ENCODE measurements at regions of chr6 and their contacts with region 1.

Region 1: GRCh38 chr6:27132532-27133280 is 114.8 kb upstream of the PRSS16 start:
- DNase-seq: peak; percentile 96 to 99 (median 98)
- H3K4me3 ChIP-seq: peak overlapping the region; percentile 72 to 90
- H3K4me3 Mint-ChIP-seq: no peak overlapping the region
- H3K27ac ChIP-seq: peak overlapping the region; percentile 93
- H3K27ac Mint-ChIP-seq: no peak overlapping the region
- H3K4me1 ChIP-seq: peaks cover 27% of the 10 kb centered on the region
- H3K4me1 Mint-ChIP-seq: peaks cover 0 to 24% (median 10%) of the 10 kb centered on the region in 4 donors
- H3K27me3 ChIP-seq: no peaks in the 10 kb centered on the region
- H3K27me3 Mint-ChIP-seq: no peaks in the 10 kb centered on the region

Region 2: DNA sequence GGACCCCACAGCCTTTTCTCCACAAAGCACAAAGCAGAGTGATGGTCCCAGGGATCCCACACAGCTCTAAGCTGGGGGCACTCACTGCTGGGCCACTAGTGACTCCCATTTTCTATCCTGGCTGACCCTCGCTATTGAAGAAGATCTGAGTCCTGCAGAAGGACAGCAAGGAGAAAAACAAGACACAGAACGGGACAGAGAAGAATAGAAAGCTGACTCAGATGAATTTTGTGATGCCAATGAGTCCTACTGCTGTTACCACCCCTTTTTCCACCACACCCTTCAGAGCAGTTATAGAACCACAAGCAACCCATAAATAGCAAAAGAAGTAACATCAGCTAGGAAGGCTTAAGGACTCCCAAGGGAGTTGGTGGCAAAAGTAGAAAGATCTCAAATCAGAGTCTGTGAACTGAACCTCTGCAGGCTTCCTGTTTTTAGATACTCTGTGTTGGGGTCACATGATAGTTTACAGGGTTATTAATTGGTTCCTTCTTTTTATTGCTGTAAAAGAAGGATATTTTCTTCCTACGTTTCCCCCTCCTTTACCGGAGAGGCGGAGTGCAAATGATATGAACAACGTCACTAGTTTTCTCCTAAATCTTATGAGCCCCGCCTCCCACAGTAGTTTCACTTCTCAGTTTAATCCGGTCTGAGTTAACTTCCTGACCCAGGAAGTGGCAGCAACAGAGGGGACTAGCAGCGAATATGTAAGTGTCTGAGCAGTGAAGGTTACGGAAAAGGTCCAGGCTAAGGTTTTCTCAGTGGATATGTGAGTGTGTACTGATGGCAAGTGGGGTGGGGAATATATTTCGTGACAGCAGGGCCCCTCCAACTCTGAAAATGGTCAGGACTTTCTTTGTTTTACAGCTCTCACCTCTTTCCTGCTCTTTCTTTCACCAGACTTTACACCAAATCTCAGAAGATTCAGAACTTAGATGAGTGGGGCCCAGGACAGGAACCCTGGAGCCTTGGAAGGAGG is 1170.3 kb before region 1 on chr6 and contains the start of gene TRIM38:
- CTCF ChIA-PET with region 1: no interaction called
- POLR2A ChIA-PET with region 1: interaction called, 3 read pairs
- intact Hi-C with region 1: loop called (anchors 5 kb)
- DNase-seq: peak; percentile 82 to 95 (median 87)
- H3K4me3 ChIP-seq: peak within 1 kb of the TSS; percentile 66 to 90
- H3K4me3 Mint-ChIP-seq: peak within 1 kb of the TSS; percentile 98 to 100 (median 98)
- H3K27ac ChIP-seq: peak within 1 kb of the TSS; percentile 92
- H3K27ac Mint-ChIP-seq: peak within 1 kb of the TSS; percentile 92 to 100 (median 99)
- H3K4me1 ChIP-seq: peaks cover 84% of the 10 kb centered on the region
- H3K4me1 Mint-ChIP-seq: peaks cover 64 to 93% (median 79%) of the 10 kb centered on the region in 4 donors
- H3K27me3 ChIP-seq: no peaks in the 10 kb centered on the region
- H3K27me3 Mint-ChIP-seq: no peaks in the 10 kb centered on the region
- total RNA-seq, gene TRIM38: 37.7 TPM

Region 3: DNA sequence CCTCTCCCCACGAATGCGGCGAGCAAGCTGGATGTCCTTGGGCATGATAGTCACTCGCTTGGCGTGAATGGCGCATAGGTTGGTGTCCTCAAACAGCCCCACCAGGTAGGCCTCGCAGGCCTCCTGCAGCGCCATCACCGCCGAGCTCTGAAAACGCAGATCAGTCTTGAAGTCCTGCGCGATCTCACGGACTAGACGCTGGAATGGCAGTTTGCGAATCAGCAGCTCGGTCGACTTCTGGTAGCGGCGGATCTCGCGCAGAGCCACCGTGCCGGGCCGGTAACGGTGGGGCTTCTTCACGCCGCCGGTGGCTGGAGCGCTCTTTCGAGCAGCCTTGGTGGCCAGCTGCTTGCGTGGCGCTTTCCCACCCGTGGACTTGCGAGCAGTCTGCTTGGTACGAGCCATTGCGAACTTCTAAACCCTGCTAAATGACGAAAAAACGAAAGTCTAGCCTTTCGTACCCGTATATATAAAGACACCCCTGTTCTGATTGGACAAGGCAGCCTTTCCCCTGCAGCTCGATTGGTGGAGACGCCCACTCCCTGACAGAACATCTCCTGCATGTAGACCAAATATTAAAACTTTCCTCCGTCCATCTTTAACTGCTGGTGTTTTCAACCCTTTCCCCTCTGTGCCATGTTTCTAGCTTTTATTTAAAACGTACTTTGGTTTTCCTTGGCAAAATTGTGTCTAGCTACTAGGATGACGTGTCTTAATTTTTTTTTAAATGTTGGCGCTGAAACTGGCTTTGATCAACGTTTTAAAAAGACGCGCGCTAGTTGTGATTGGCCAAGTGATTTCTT is 935.7 kb before region 1 on chr6:
- CTCF ChIA-PET with region 1: no interaction called
- POLR2A ChIA-PET with region 1: interaction called, 72 read pairs
- intact Hi-C with region 1: no loop called
- DNase-seq: peak; percentile 92 to 93 (median 92)
- H3K4me3 ChIP-seq: peak overlapping the region; percentile 83 to 97
- H3K4me3 Mint-ChIP-seq: peak overlapping the region; percentile 94 to 99 (median 97)
- H3K27ac ChIP-seq: peak overlapping the region; percentile 84
- H3K27ac Mint-ChIP-seq: peak overlapping the region; percentile 96 to 100 (median 98)
- H3K4me1 ChIP-seq: peaks cover 43% of the 10 kb centered on the region
- H3K4me1 Mint-ChIP-seq: peaks cover 23 to 57% (median 41%) of the 10 kb centered on the region in 4 donors
- H3K27me3 ChIP-seq: no peaks in the 10 kb centered on the region
- H3K27me3 Mint-ChIP-seq: no peaks in the 10 kb centered on the region

Region 4: DNA sequence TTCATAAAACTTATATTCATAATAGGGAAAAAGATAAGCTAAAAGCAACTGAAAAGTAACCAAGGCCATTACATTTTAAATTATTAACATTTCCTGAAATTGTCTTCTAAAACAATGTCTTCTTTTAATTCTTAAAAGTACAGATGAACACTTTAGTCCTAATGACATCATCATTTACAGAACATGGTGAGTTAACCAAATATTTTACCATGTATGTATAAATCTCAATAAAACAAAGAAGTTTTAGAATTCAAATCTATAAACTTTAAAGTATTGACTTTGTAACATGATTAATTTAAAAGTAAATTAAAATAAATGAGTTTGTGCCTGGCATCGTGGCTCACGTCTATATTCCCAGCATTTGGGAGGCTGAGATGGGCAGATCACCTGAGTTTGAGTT is 11.1 kb before region 1 on chr6:
- CTCF ChIA-PET with region 1: no interaction called
- POLR2A ChIA-PET with region 1: interaction called, 12 read pairs
- intact Hi-C with region 1: no loop called
- DNase-seq: no peak
- H3K4me3 ChIP-seq: no peak overlapping the region
- H3K4me3 Mint-ChIP-seq: peak overlapping the region in 2 of 8 donors; percentile 16 to 48
- H3K27ac ChIP-seq: no peak overlapping the region
- H3K27ac Mint-ChIP-seq: no peak overlapping the region
- H3K4me1 ChIP-seq: peaks cover 16% of the 10 kb centered on the region
- H3K4me1 Mint-ChIP-seq: peaks cover 10 to 15% (median 11%) of the 10 kb centered on the region in 4 donors
- H3K27me3 ChIP-seq: no peaks in the 10 kb centered on the region
- H3K27me3 Mint-ChIP-seq: no peaks in the 10 kb centered on the region

Region 5: GRCh38 chr6:27472617-27473400 is 340.1 kb after region 1 on chr6 and contains the start of gene ZNF184:
- CTCF ChIA-PET with region 1: no interaction called
- POLR2A ChIA-PET with region 1: interaction called, 13 read pairs
- intact Hi-C with region 1: loop called (anchors 2 kb)
- DNase-seq: peak; percentile 86 to 90 (median 89)
- H3K4me3 ChIP-seq: peak within 1 kb of the TSS; percentile 70 to 98
- H3K4me3 Mint-ChIP-seq: peak within 1 kb of the TSS; percentile 92 to 99 (median 96)
- H3K27ac ChIP-seq: peak within 1 kb of the TSS; percentile 92
- H3K27ac Mint-ChIP-seq: peak within 1 kb of the TSS; percentile 93 to 99 (median 96)
- H3K4me1 ChIP-seq: peaks cover 56% of the 10 kb centered on the region
- H3K4me1 Mint-ChIP-seq: peaks cover 33 to 65% (median 43%) of the 10 kb centered on the region in 4 donors
- H3K27me3 ChIP-seq: no peaks in the 10 kb centered on the region
- H3K27me3 Mint-ChIP-seq: no peaks in the 10 kb centered on the region
- total RNA-seq, gene ZNF184: 15.2 to 17.4 TPM

Region 6: DNA sequence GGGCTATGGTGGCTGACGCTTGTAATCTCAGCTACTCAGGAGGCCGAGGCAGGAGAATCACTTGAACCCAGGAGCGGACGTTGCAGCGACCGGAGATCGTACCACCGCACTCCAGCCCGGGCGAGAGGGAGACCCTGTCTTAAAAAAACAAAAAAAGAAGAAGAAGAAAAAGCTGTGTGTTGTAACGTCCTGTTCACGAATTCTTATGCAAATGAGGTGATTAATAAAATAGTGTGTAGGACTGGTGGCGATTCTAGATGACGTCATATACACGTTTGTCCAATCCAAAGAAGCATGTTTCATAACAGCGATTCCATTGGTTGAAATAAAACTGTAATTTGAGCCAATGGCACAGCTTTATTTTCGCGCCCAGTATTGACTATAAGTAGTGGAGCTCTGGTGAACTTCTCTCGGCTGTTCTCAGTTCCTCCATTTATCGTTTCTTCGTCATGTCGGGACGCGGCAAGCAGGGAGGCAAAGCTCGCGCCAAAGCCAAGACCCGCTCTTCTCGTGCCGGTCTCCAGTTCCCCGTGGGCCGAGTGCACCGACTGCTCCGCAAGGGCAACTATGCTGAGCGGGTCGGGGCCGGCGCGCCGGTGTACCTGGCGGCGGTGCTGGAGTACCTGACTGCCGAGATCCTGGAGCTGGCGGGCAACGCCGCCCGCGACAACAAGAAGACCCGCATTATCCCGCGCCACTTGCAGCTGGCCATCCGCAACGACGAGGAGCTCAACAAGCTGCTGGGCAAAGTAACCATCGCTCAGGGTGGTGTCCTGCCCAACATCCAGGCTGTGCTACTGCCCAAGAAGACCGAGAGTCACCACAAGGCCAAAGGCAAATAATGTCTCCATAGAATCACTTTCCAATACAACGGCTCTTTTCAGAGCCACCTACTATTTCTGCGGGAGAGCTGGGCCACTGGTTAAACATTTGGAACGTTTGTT is 732.5 kb after region 1 on chr6:
- CTCF ChIA-PET with region 1: interaction called, 5 read pairs
- POLR2A ChIA-PET with region 1: interaction called, 55 read pairs
- intact Hi-C with region 1: no loop called
- DNase-seq: peak; percentile 86 to 93 (median 91)
- H3K4me3 ChIP-seq: peak overlapping the region; percentile 33 to 69
- H3K4me3 Mint-ChIP-seq: peak overlapping the region; percentile 96 to 99 (median 99)
- H3K27ac ChIP-seq: peak overlapping the region; percentile 62
- H3K27ac Mint-ChIP-seq: peak overlapping the region; percentile 94 to 99 (median 98)
- H3K4me1 ChIP-seq: peaks cover 31% of the 10 kb centered on the region
- H3K4me1 Mint-ChIP-seq: peaks cover 18 to 46% (median 34%) of the 10 kb centered on the region in 4 donors
- H3K27me3 ChIP-seq: no peaks in the 10 kb centered on the region
- H3K27me3 Mint-ChIP-seq: no peaks in the 10 kb centered on the region

Measured in CD4-positive, alpha-beta memory T cell (primary cell).